GM12878 (cell line): ENCODE measurements at regions of chr5 and their contacts with region 1.

Region 1: GRCh38 chr5:68711293-68712200 is 382.3 kb upstream of the SLC30A5 start:
- DNase-seq: peak; percentile 72
- ATAC-seq: peak; percentile 93
- H3K4me3 ChIP-seq: peak overlapping the region; percentile 14; the same call in 1 of the 2 replicates
- H3K27ac ChIP-seq: peak overlapping the region; percentile 61
- H3K4me1 ChIP-seq: peaks cover 21% of the 10 kb centered on the region
- H3K27me3 ChIP-seq: no peaks in the 10 kb centered on the region
- CTCF ChIP-seq: no peak
- EP300 ChIP-seq: peak in 1 of 2 experiments; percentile 66; a peak in 2 of 4 replicates
- POLR2A ChIP-seq: no peak
- RAD21 ChIP-seq: 0 out of 2 replicates have a peak, but pooled peaks have one; percentile 27

Region 2: DNA sequence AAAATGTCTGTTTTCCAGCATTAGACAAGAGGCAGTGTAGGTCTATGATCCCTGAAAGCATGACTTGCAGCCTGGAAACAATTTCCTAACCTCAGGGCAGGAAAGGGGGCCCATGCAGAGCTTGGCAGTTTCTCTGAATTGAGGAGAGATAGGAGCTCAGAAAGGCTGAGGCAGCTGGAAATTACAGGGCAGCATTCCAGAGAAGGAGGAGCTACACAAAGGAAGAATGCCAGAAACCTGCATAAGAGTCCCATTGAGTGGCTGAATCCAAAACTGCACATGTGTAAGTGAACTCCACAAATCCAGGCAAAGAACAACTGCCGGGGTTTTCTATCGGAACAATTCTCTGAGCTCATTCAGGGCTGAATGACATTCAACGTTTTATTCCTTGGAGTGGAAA is 149.2 kb before region 1 on chr5:
- CTCF ChIA-PET with region 1: no interaction called
- POLR2A ChIA-PET with region 1: no interaction called
- RAD21 ChIA-PET with region 1: no interaction called
- SMC1A ChIA-PET with region 1: interaction called, 5 read pairs
- in situ Hi-C with region 1: no loop called
- intact Hi-C with region 1: loop called (anchors 5 kb)
- DNase-seq: no peak
- ATAC-seq: no peak
- H3K4me3 ChIP-seq: no peak overlapping the region
- H3K27ac ChIP-seq: no peak overlapping the region
- H3K4me1 ChIP-seq: peaks cover 6% of the 10 kb centered on the region; the same call in 1 of the 2 replicates
- H3K27me3 ChIP-seq: no peaks in the 10 kb centered on the region
- CTCF ChIP-seq: no peak
- EP300 ChIP-seq: no peak
- POLR2A ChIP-seq: no peak
- RAD21 ChIP-seq: no peak

Region 3: DNA sequence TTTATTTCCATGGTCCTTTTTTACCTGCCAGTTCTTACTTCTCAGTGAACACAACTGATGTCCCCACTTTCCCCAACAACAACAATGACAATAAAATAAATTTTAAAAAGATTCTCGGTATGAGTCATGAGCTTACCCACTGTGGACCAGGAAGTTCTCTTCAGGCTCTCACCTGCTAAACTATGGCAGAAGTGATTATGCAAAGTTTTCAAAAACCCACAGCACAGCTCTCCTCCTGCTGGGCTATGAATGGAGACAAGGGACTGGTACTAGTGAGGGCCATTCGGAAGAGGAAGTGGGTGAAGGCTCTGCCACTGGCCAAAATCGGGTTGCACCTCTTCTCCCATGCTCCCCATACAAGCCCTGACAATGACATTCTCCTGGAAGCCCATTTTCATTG is 66.6 kb before region 1 on chr5:
- CTCF ChIA-PET with region 1: interaction called, 7 read pairs
- POLR2A ChIA-PET with region 1: interaction called, 3 read pairs
- RAD21 ChIA-PET with region 1: interaction called, 7 read pairs
- SMC1A ChIA-PET with region 1: interaction called, 17 read pairs
- in situ Hi-C with region 1: no loop called
- intact Hi-C with region 1: loop called (anchors 2 kb)
- DNase-seq: peak; percentile 83
- ATAC-seq: peak; percentile 97
- H3K4me3 ChIP-seq: no peak overlapping the region
- H3K27ac ChIP-seq: no peak overlapping the region
- H3K4me1 ChIP-seq: peaks cover 13% of the 10 kb centered on the region; the same call in 1 of the 2 replicates
- H3K27me3 ChIP-seq: no peaks in the 10 kb centered on the region
- CTCF ChIP-seq: no peak
- EP300 ChIP-seq: peak; percentile 14 to 57; a peak in 2 of 4 replicates
- POLR2A ChIP-seq: no peak
- RAD21 ChIP-seq: peak; percentile 36

Region 4: GRCh38 chr5:68699966-68700365 is 11.6 kb before region 1 on chr5:
- CTCF ChIA-PET with region 1: no interaction called
- POLR2A ChIA-PET with region 1: interaction called, 4 read pairs
- RAD21 ChIA-PET with region 1: interaction called, 4 read pairs
- SMC1A ChIA-PET with region 1: interaction called, 11 read pairs
- in situ Hi-C with region 1: no loop called
- intact Hi-C with region 1: no loop called
- DNase-seq: peak; percentile 31
- ATAC-seq: peak; percentile 23; the same call in 1 of the 3 replicates
- H3K4me3 ChIP-seq: no peak overlapping the region
- H3K27ac ChIP-seq: no peak overlapping the region
- H3K4me1 ChIP-seq: no peaks in the 10 kb centered on the region
- H3K27me3 ChIP-seq: no peaks in the 10 kb centered on the region
- CTCF ChIP-seq: no peak
- EP300 ChIP-seq: no peak
- POLR2A ChIP-seq: no peak
- RAD21 ChIP-seq: no peak

Region 5: DNA sequence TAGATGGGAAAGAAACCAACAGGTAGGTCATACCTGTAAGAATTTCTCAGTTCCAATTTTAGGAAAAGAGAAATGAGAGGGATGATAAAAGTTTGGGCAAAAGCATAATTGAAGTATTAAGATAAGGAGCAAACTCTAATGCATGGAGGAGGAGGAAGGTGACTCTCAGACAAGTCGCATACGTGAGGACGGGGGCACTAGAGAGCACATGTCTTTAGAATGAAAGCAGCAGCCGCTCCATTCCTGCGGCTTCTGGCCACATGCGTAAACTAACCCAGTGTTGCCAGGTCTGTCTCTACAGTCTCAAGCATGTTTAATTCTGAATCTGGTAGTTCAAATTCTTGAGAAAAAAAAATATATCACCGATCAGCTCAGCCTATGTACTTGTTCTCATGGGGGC is 10.8 kb after region 1 on chr5:
- CTCF ChIA-PET with region 1: interaction called, 3 read pairs
- POLR2A ChIA-PET with region 1: interaction called, 3 read pairs
- RAD21 ChIA-PET with region 1: no interaction called
- SMC1A ChIA-PET with region 1: interaction called, 10 read pairs
- in situ Hi-C with region 1: no loop called
- intact Hi-C with region 1: no loop called
- DNase-seq: no peak
- ATAC-seq: no peak
- H3K4me3 ChIP-seq: no peak overlapping the region
- H3K27ac ChIP-seq: no peak overlapping the region
- H3K4me1 ChIP-seq: no peaks in the 10 kb centered on the region
- H3K27me3 ChIP-seq: no peaks in the 10 kb centered on the region
- CTCF ChIP-seq: no peak
- EP300 ChIP-seq: no peak
- POLR2A ChIP-seq: no peak
- RAD21 ChIP-seq: no peak

Region 6: GRCh38 chr5:68740204-68740910 is 28.8 kb after region 1 on chr5:
- CTCF ChIA-PET with region 1: no interaction called
- POLR2A ChIA-PET with region 1: no interaction called
- RAD21 ChIA-PET with region 1: interaction called, 8 read pairs
- SMC1A ChIA-PET with region 1: interaction called, 6 read pairs
- in situ Hi-C with region 1: no loop called
- intact Hi-C with region 1: loop called (anchors 1 kb)
- DNase-seq: peak; percentile 33
- ATAC-seq: peak; percentile 84
- H3K4me3 ChIP-seq: no peak overlapping the region
- H3K27ac ChIP-seq: no peak overlapping the region
- H3K4me1 ChIP-seq: 0 out of 2 replicates have a peak, but pooled peaks cover 7% of the 10 kb centered on the region
- H3K27me3 ChIP-seq: no peaks in the 10 kb centered on the region
- CTCF ChIP-seq: no peak
- EP300 ChIP-seq: peak in 1 of 2 experiments; percentile 26; a peak in 1 of 4 replicates
- POLR2A ChIP-seq: no peak
- RAD21 ChIP-seq: 0 out of 2 replicates have a peak, but pooled peaks have one; percentile 2